ENCODE measurements at regions of chr5 and their contacts with region 1.

Region 1: DNA sequence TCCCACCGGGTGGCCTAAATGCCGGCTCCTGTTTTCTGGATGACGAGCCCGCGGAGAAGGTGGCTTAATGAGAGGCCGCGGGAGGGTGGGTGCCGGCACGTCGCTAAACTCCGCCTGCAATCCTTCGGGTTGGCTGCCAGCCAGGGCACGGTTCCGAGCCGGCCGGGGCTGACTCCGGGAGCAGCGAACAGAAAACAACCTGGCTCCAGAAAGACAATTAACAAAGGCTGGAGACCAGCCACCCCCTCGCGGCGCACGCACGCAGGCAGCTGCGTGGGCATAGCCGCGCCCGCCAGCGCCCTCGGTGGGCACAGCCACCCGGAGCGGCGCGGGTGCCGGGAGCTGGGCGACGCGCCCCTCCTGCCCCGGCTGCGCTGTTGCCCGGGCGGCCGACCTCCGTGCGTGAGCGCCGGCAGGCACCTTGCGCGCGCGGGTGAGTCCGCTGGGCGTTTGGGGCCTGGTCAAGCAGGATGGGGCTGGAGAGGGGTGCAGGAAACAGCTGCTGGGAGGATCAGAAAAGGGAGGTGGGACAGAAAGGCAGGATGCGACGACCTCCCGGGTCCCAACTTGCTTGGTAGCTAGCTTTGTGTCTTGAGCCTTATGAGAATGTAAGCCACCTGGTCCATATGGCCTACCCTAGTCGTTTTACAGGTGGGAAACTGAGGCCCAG is at the start of gene ARHGEF37:
- DNase-seq: peak; percentile 82
- H3K4me3 Mint-ChIP-seq: peak within 1 kb of the TSS; percentile 72
- H3K27ac Mint-ChIP-seq: peak within 1 kb of the TSS; percentile 55
- H3K4me1 Mint-ChIP-seq: peaks cover 15% of the 10 kb centered on the region
- H3K27me3 Mint-ChIP-seq: no peaks in the 10 kb centered on the region
- total RNA-seq, gene ARHGEF37: 1.5 and 1.8 TPM in 2 replicates

Region 2: DNA sequence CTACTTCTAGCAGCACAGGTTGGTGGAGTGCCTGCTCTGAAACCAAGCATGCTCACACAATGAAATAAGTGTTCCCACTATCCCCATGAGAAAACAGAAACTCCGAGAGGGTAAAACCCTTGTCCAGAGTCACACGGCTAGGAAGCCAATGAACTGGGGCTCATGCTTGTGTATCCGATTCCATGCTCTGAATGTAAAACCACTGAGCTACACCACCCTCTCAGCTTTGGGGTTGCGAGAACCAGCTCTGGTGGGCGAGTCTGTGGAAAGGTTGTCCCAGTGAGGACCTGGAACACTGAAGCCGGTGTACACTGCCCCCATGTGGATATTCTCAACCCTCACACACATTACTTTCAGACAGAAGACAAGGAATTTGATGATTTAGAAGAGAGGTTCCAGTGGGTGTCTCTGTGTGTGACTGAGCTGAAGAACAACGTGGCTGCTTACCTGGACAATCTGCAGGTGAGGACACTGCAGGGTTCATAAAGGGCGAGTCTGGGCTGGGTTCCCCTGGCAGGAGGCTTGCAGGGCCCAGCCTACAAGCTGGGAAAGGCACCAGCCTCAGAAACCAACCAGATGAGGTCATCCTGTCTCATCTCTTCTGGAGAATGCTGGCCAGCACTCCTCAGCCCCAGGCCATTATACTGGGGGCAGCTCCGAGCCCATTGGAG is 37.4 kb after region 1 on chr5:
- intact Hi-C with region 1: loop called (anchors 5 kb)
- DNase-seq: peak; percentile 73
- H3K4me3 Mint-ChIP-seq: no peak overlapping the region
- H3K27ac Mint-ChIP-seq: no peak overlapping the region
- H3K4me1 Mint-ChIP-seq: peaks cover 10% of the 10 kb centered on the region
- H3K27me3 Mint-ChIP-seq: no peaks in the 10 kb centered on the region

Region 3: GRCh38 chr5:149834246-149834855 is 253.0 kb after region 1 on chr5:
- intact Hi-C with region 1: no loop called
- DNase-seq: peak; percentile 88
- H3K4me3 Mint-ChIP-seq: no peak overlapping the region
- H3K27ac Mint-ChIP-seq: no peak overlapping the region
- H3K4me1 Mint-ChIP-seq: peaks cover 10% of the 10 kb centered on the region
- H3K27me3 Mint-ChIP-seq: no peaks in the 10 kb centered on the region